ENCODE measurements at regions of chr17 and their contacts with region 1.

Region 1: DNA sequence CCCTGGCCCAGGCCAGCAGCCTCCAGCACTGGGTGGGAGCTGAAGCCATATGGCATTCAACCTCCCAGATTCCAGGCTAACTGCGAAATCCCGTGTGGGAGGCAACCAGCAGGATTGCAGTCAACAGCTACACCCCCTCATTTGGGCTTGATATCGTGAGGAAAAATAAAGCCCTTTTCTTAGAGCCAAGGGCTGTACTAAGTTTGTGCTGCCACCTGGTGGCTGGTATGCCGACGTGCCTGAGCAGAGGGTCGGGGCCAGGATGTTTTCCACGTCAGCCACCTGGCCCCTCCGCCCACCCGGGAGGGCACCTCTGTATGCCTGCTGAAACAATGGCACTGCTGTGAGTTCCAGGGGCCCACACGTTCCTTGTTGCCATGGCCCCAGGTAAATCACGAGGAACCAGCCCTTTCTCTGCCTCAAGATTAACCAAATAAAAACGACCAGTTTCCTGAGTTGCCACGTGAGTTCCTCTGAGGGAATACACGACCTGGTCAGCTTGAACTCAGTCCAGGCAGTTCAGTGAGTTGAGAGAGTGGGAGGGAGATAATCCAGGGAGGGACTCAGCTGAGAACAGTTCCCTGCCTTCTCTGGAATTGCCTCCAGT is 9.0 kb downstream of the TMEM98 start:
- DNase-seq: peak; percentile 76
- H3K4me3 Mint-ChIP-seq: no peak overlapping the region
- H3K27ac Mint-ChIP-seq: no peak overlapping the region
- H3K4me1 Mint-ChIP-seq: no peaks in the 10 kb centered on the region
- H3K27me3 Mint-ChIP-seq: peaks cover 16% of the 10 kb centered on the region

Region 2: GRCh38 chr17:32819035-32819434 is 118.0 kb before region 1 on chr17:
- CTCF ChIA-PET with region 1: no interaction called
- intact Hi-C with region 1: no loop called
- DNase-seq: no peak
- H3K4me3 Mint-ChIP-seq: no peak overlapping the region
- H3K27ac Mint-ChIP-seq: no peak overlapping the region
- H3K4me1 Mint-ChIP-seq: peaks cover 8% of the 10 kb centered on the region
- H3K27me3 Mint-ChIP-seq: peaks cover 12% of the 10 kb centered on the region

Region 3: DNA sequence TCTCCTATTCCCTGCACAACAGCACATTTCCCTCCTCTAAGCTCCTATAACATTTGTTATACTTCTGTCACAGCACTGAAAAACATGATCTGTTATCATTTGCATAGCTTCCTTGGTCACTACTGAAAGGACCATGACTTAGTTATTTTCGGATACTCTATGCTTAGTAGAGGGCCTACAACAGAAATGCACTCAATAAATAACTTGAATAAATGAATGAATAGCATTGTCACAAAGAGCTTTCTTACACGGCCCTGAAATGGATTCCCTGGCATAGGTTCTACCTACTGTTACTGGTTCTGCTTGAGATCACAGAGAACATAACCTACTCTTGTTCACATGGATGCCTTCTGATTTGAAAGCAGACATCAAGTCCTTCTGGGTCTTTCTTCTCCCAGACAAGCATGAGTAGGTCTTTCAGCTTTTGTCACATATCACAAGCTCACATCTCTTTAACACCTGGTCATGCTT is 101.7 kb before region 1 on chr17:
- CTCF ChIA-PET with region 1: no interaction called
- intact Hi-C with region 1: no loop called
- DNase-seq: no peak
- H3K4me3 Mint-ChIP-seq: no peak overlapping the region
- H3K27ac Mint-ChIP-seq: no peak overlapping the region
- H3K4me1 Mint-ChIP-seq: no peaks in the 10 kb centered on the region
- H3K27me3 Mint-ChIP-seq: no peaks in the 10 kb centered on the region

Region 4: GRCh38 chr17:32997753-32998632 is 61.0 kb after region 1 on chr17:
- CTCF ChIA-PET with region 1: interaction called, 9 read pairs
- intact Hi-C with region 1: loop called (anchors 2 kb)
- DNase-seq: peak; percentile 83
- H3K4me3 Mint-ChIP-seq: no peak overlapping the region
- H3K27ac Mint-ChIP-seq: no peak overlapping the region
- H3K4me1 Mint-ChIP-seq: peaks cover 4% of the 10 kb centered on the region
- H3K27me3 Mint-ChIP-seq: peaks cover 18% of the 10 kb centered on the region

Region 5: DNA sequence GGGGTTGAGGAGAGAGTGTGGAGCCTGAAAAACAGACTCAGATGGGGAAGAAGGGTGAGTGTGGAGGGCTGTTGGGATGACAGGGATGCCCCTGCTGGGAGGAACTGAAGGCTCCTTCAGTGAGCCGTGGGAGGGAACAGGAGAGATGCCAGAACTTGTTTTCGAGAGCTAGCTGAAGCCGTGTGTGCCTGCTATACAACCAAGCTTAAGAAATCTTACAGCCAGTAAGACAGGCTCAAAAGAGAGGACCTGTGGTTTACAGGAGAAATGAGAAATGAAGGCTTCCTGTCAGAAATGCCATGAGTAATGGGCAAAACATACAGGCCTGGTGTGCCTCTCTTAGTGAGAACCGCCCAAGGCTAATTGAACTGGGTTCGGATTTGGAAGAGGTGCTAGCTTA is 154.3 kb after region 1 on chr17:
- CTCF ChIA-PET with region 1: no interaction called
- intact Hi-C with region 1: no loop called
- DNase-seq: no peak
- H3K4me3 Mint-ChIP-seq: no peak overlapping the region
- H3K27ac Mint-ChIP-seq: no peak overlapping the region
- H3K4me1 Mint-ChIP-seq: no peaks in the 10 kb centered on the region
- H3K27me3 Mint-ChIP-seq: peaks cover 17% of the 10 kb centered on the region